Posterior vena cava (tissue), 2 donors: ENCODE measurements at regions of chr5 and their contacts with region 1.

Region 1: DNA sequence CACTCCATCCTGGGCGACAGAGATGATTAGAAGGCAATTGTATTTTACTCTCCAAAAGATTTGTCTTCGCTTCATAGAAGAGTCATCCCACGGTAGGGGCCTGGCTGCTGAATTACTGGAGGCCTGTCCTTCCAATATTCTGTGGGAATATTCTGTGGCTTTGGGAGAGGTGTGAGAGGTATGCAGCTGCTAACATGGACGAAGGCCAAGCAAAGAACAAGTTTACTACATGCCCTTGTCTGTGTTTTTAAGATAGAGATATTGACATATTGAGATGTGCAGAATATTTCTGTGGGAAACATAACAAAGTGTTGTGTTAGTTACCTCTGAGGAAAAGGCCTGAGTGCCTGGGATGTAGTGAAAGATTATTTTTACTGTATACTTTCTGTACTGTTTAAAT is 71.8 kb upstream of the SMIM15 start:
- DNase-seq: no peak

Region 2: GRCh38 chr5:61200582-61201155 is 33.4 kb before region 1 on chr5:
- intact Hi-C with region 1: loop called in 1 of 2 experiments (anchors 1 kb)
- DNase-seq: no peak